ENCODE measurements at regions of chr1 and their contacts with region 1.

Region 1: GRCh38 chr1:87084244-87084836 is 169.9 kb downstream of the HS2ST1 start:
- DNase-seq: peak; percentile 10
- H3K4me3 ChIP-seq: no peak overlapping the region
- H3K27ac ChIP-seq: no peak overlapping the region
- H3K4me1 ChIP-seq: peaks cover 0 to 3% of the 10 kb centered on the region in 2 experiments; a peak in 1 of 4 replicates
- H3K27me3 ChIP-seq: no peaks in the 10 kb centered on the region
- CTCF ChIP-seq: peak; percentile 62
- EP300 ChIP-seq: no peak
- RAD21 ChIP-seq: peak; percentile 54

Region 2: GRCh38 chr1:86704458-86704971 is 379.8 kb before region 1 on chr1 and contains the start of gene SH3GLB1:
- CTCF ChIA-PET with region 1: interaction called, 16 read pairs
- POLR2A ChIA-PET with region 1: no interaction called
- DNase-seq: peak; percentile 91
- H3K4me3 ChIP-seq: peak within 1 kb of the TSS; percentile 84 to 92
- H3K27ac ChIP-seq: peak within 1 kb of the TSS; percentile 89 to 93
- H3K4me1 ChIP-seq: peaks cover 0 to 8% of the 10 kb centered on the region in 2 experiments; a peak in 2 of 4 replicates
- H3K27me3 ChIP-seq: no peaks in the 10 kb centered on the region
- CTCF ChIP-seq: peak; percentile 88
- EP300 ChIP-seq: peak in 1 of 2 experiments; percentile 28; a peak in 1 of 4 replicates
- RAD21 ChIP-seq: peak; percentile 50
- polyA plus RNA-seq, gene SH3GLB1: 13.2 and 16.3 TPM in 2 replicates

Region 3: GRCh38 chr1:86833461-86834215 is 250.7 kb before region 1 on chr1:
- CTCF ChIA-PET with region 1: interaction called, 78 read pairs
- POLR2A ChIA-PET with region 1: no interaction called
- DNase-seq: peak; percentile 71
- H3K4me3 ChIP-seq: peak overlapping the region in 1 of 2 experiments; percentile 9; a peak in 1 of 4 replicates
- H3K27ac ChIP-seq: peak overlapping the region; percentile 26 to 36; a peak in 2 of 4 replicates
- H3K4me1 ChIP-seq: no peaks in the 10 kb centered on the region
- H3K27me3 ChIP-seq: no peaks in the 10 kb centered on the region
- CTCF ChIP-seq: peak; percentile 70
- EP300 ChIP-seq: no peak
- RAD21 ChIP-seq: peak; percentile 87

Region 4: DNA sequence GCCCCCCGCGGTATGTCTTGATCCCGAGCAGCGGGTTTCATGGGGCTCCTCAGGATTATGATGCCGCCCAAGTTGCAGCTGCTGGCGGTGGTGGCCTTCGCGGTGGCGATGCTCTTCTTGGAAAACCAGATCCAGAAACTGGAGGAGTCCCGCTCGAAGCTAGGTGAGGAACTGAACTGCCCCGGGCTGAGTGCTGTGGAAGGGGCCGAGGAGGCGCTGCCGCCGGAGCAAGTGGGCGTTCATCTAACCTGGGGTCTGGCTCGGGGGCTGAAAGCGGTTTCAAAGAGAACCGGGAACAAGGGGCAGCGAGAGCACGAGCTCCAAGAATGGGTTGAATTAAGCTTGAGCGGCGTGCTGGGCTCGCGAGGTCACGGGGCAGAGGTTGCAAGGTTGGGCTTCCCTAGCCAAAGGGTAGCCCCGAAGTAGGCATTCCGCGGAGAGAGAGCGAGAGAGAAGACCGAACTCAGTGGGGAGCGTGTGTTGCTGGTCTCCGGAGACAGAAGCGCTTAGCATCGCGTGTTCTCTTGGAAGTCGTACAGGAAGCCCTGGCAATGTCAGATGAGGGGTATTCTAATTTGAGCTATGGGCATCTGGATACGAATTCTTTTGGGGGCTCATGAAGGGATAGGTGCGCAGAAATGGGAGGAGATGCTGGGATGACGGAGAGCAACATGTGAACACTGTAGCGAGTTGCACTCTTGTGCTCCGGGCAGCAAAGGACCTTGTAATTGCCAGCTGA is 169.2 kb before region 1 on chr1:
- CTCF ChIA-PET with region 1: interaction called, 14 read pairs
- POLR2A ChIA-PET with region 1: no interaction called
- DNase-seq: peak; percentile 45
- H3K4me3 ChIP-seq: peak overlapping the region; percentile 95 to 97
- H3K27ac ChIP-seq: peak overlapping the region; percentile 75 to 94
- H3K4me1 ChIP-seq: peaks cover 0 to 13% of the 10 kb centered on the region in 2 experiments; a peak in 3 of 4 replicates
- H3K27me3 ChIP-seq: no peaks in the 10 kb centered on the region
- CTCF ChIP-seq: no peak
- EP300 ChIP-seq: no peak
- RAD21 ChIP-seq: no peak

Region 5: GRCh38 chr1:87064986-87065385 is 19.4 kb before region 1 on chr1:
- CTCF ChIA-PET with region 1: interaction called, 10 read pairs
- POLR2A ChIA-PET with region 1: no interaction called
- DNase-seq: no peak
- H3K4me3 ChIP-seq: no peak overlapping the region
- H3K27ac ChIP-seq: no peak overlapping the region
- H3K4me1 ChIP-seq: no peaks in the 10 kb centered on the region; a peak in 1 of 4 replicates
- H3K27me3 ChIP-seq: no peaks in the 10 kb centered on the region
- CTCF ChIP-seq: no peak
- EP300 ChIP-seq: no peak
- RAD21 ChIP-seq: no peak

Region 6: GRCh38 chr1:87074001-87074795 is 10.1 kb before region 1 on chr1:
- CTCF ChIA-PET with region 1: interaction called, 41 read pairs
- POLR2A ChIA-PET with region 1: no interaction called
- DNase-seq: no peak
- H3K4me3 ChIP-seq: no peak overlapping the region
- H3K27ac ChIP-seq: no peak overlapping the region
- H3K4me1 ChIP-seq: no peaks in the 10 kb centered on the region; a peak in 2 of 4 replicates
- H3K27me3 ChIP-seq: no peaks in the 10 kb centered on the region
- CTCF ChIP-seq: no peak
- EP300 ChIP-seq: no peak
- RAD21 ChIP-seq: no peak

Region 7: GRCh38 chr1:87100271-87100670 is 15.9 kb after region 1 on chr1:
- CTCF ChIA-PET with region 1: interaction called, 40 read pairs
- POLR2A ChIA-PET with region 1: no interaction called
- DNase-seq: no peak
- H3K4me3 ChIP-seq: no peak overlapping the region
- H3K27ac ChIP-seq: no peak overlapping the region
- H3K4me1 ChIP-seq: no peaks in the 10 kb centered on the region; a peak in 2 of 4 replicates
- H3K27me3 ChIP-seq: no peaks in the 10 kb centered on the region
- CTCF ChIP-seq: no peak
- EP300 ChIP-seq: no peak
- RAD21 ChIP-seq: no peak

Measured in SK-N-SH (cell line).